AG04450 (cell line): ENCODE measurements at regions of chr15 and their contacts with region 1.

Region 1: GRCh38 chr15:90320061-90320884 is 31.8 kb upstream of the ZNF774 start:
- DNase-seq: peak; percentile 71
- H3K4me3 ChIP-seq: peak overlapping the region; percentile 10; the same call in 1 of the 2 replicates
- H3K27ac ChIP-seq: no peak overlapping the region
- H3K27me3 ChIP-seq: no peaks in the 10 kb centered on the region
- CTCF ChIP-seq: peak; percentile 100

Region 2: DNA sequence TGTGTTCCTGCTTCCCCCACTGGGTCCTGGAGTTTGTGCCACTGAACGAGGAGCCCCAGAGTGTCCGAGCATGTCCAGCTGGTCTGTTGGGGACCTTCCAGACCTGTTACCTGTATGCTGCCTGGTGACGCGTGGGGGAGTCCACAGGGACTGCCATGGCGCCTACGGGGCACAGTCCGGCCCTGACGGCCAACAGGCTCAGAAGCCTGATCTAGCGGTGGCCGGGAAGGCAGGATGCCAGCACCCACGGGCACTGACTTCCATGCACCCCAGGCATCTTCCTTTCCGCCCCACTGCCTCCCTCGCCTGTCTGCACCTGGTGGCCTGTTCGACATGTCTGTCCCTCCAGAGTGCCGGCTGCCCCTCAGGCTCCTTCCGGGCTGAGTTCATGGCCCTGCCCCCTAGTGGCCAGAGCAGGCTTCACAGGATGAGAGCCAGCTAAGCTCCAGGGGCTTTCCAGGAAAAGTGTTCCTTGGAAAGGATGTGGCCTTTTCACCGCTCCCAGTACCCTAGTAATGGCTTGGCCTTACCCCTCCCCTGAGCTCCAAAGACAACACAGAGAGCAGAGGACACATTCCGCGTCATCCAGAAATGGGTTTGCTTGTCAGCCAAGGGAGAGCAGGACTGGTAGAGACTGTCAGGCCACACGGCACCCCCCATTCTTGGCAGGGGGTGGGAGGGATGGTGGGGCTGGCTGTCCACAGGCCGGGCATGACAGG is 19.1 kb before region 1 on chr15:
- CTCF ChIA-PET with region 1: interaction called, 54 read pairs
- POLR2A ChIA-PET with region 1: no interaction called
- DNase-seq: no peak
- H3K4me3 ChIP-seq: no peak overlapping the region
- H3K27ac ChIP-seq: no peak overlapping the region
- H3K27me3 ChIP-seq: peaks cover under 1% of the 10 kb centered on the region
- CTCF ChIP-seq: peak; percentile 83

Region 3: DNA sequence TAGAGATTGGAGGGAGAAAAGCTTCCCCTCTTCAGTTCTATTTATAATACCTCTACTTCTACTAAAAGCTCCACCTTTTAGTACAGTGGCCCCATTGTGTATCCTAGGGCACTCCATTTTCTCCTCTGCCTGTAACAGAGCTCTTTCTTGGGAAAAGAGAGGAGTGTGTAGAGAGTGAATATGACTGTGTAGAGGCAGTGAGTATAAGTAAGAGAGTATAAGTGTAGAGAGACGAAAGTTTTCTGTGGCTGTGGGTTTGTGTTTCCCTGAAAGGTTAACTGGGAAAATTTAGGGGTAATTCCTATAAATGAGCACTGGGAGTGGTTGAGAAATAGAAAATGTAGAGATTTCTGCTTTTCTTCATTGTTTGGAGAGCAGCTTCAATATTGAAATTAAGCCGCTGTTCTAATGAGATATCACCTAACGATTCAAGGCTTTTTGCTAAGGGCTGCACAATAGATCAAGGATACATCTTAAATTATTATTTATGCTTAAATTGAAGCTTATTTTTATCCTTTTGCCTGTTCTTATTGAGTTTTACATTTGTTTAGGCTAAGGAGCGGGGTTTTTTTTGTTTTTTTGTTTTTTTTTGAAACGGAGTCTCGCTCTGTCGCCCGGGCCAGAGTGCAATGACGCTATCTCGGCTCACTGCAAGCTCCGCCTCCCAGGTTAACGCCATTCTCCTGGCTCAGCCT is 74.6 kb after region 1 on chr15:
- CTCF ChIA-PET with region 1: interaction called, 10 read pairs
- POLR2A ChIA-PET with region 1: no interaction called
- DNase-seq: no peak
- H3K4me3 ChIP-seq: no peak overlapping the region
- H3K27ac ChIP-seq: no peak overlapping the region
- H3K27me3 ChIP-seq: no peaks in the 10 kb centered on the region
- CTCF ChIP-seq: no peak

Region 4: DNA sequence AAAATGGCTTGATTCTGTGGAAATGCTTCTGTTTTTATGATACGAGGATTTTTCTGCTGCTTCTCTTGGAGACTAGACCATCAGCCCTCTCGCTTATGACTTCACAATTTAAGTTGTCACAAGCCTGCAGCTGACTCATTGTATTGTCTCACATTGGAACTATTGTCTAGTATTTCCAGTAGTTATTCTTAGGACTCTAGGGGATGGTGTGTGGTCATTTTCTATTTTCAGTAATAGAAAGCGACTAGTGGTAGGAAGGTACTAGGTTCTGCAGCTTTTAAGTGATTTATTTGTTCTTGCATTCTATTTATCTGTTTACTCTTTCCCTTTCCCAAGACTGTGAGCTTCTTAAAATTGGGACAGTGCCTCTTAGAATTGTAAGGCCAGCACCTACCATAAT is 143.1 kb after region 1 on chr15:
- CTCF ChIA-PET with region 1: interaction called, 56 read pairs
- POLR2A ChIA-PET with region 1: no interaction called
- DNase-seq: no peak
- H3K4me3 ChIP-seq: no peak overlapping the region
- H3K27ac ChIP-seq: no peak overlapping the region
- H3K27me3 ChIP-seq: no peaks in the 10 kb centered on the region
- CTCF ChIP-seq: 0 out of 2 replicates have a peak, but pooled peaks have one; percentile 2

Region 5: DNA sequence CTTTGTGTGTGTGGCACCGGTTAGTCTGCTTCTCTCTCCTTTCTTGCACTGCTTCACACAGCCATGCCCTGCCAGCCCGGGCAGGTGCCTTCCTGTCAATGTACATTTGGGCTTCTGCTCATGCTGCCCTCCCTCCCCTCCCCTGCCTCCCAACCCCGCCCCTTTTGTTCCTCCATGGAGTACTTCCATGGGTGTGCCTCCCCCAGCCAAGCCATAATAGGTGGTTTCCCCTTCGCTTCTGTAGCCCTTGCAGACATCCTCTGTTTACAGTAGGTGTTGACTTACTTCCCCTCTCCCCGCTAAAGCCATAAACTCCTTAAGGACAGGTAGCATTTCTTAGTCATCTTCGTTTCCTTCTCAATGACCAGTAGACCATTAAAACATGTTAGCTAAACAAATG is 177.6 kb after region 1 on chr15:
- CTCF ChIA-PET with region 1: interaction called, 17 read pairs
- POLR2A ChIA-PET with region 1: no interaction called
- DNase-seq: no peak
- H3K4me3 ChIP-seq: no peak overlapping the region
- H3K27ac ChIP-seq: no peak overlapping the region
- H3K27me3 ChIP-seq: no peaks in the 10 kb centered on the region
- CTCF ChIP-seq: no peak

Region 6: GRCh38 chr15:90886041-90886614 is 565.9 kb after region 1 on chr15:
- CTCF ChIA-PET with region 1: interaction called, 17 read pairs
- POLR2A ChIA-PET with region 1: no interaction called
- DNase-seq: peak; percentile 24
- H3K4me3 ChIP-seq: no peak overlapping the region
- H3K27ac ChIP-seq: no peak overlapping the region
- H3K27me3 ChIP-seq: no peaks in the 10 kb centered on the region
- CTCF ChIP-seq: peak; percentile 99